Activated T-helper 1 cell treated with anti-CD3 and anti-CD28 coated beads, Interleukin-12 subunit alpha, Interleukin-12 subunit beta, Interleukin-2, Interleukin-4 antibody, amounts not matched to agents 30 ng/mL and 10 ng/mL and 1 ng/mL, durations not matched to agents 14 hours and 24 hours and 36 hours (primary cell): ENCODE measurements at regions of chr7 and their contacts with region 1.

Region 1: DNA sequence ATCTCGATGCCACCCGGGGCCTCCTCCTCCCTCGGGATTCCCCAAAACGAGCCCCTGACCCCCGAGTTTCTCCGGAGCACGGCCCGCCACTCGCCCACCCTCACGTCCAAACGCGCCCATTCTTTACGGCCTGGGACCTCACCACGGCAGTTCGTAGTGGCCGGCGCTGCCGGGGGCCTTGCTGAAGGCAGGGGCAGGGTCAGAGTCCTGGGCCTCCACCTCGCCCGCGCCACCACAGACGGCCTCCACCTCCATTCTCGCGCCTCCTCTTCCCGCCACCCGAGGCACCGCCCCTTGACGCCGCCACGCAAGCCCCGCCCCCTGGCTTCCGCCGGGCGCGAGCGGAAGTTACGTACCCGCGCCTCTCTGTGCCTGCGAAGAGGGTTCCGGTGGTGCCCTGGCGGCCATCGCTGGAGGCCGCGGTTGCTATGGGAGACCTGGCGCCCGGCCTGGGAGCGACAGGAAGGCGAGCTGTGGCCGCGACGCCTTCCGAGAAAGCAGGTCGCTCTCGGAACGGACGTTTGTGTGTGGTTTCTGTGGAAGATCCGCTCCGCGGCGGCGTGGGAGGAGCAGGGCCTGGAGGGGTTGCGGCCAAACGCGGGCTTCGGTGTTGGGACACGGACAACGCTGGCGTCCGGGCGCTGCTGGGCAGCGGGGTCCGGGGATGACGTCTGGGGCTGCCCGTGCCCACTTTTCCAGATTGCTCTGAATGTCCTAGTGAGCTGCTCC is at the start of gene RFC2:
- DNase-seq: peak; percentile 98
- H3K4me3 Mint-ChIP-seq: peak within 1 kb of the TSS; percentile 95
- H3K27ac Mint-ChIP-seq: peak within 1 kb of the TSS; percentile 95
- H3K4me1 Mint-ChIP-seq: peaks cover 21% of the 10 kb centered on the region
- H3K27me3 Mint-ChIP-seq: no peaks in the 10 kb centered on the region
- total RNA-seq, gene RFC2: 87.3 and 89.1 TPM in 2 replicates

Region 2: GRCh38 chr7:74094224-74095101 is 159.8 kb before region 1 on chr7:
- intact Hi-C with region 1: loop called (anchors 2 kb)
- DNase-seq: peak; percentile 64
- H3K4me3 Mint-ChIP-seq: peak overlapping the region; percentile 82
- H3K27ac Mint-ChIP-seq: peak overlapping the region; percentile 95
- H3K4me1 Mint-ChIP-seq: peaks cover 18% of the 10 kb centered on the region
- H3K27me3 Mint-ChIP-seq: no peaks in the 10 kb centered on the region

Region 3: GRCh38 chr7:74173866-74174605 is 80.3 kb before region 1 on chr7 and contains the start of gene EIF4H:
- intact Hi-C with region 1: loop called (anchors 1 kb)
- DNase-seq: peak; percentile 93
- H3K4me3 Mint-ChIP-seq: peak within 1 kb of the TSS; percentile 94
- H3K27ac Mint-ChIP-seq: peak within 1 kb of the TSS; percentile 90
- H3K4me1 Mint-ChIP-seq: peaks cover 45% of the 10 kb centered on the region
- H3K27me3 Mint-ChIP-seq: peaks cover 3% of the 10 kb centered on the region
- total RNA-seq, gene EIF4H: 343 and 355 TPM in 2 replicates

Region 4: GRCh38 chr7:74206589-74207120 is 47.6 kb before region 1 on chr7:
- intact Hi-C with region 1: loop called (anchors 1 kb)
- DNase-seq: peak; percentile 72
- H3K4me3 Mint-ChIP-seq: peak overlapping the region; percentile 49
- H3K27ac Mint-ChIP-seq: no peak overlapping the region
- H3K4me1 Mint-ChIP-seq: peaks cover 23% of the 10 kb centered on the region
- H3K27me3 Mint-ChIP-seq: no peaks in the 10 kb centered on the region

Region 5: GRCh38 chr7:74269757-74270277 is 15.5 kb after region 1 on chr7:
- intact Hi-C with region 1: loop called (anchors 1 kb)
- DNase-seq: peak; percentile 42
- H3K4me3 Mint-ChIP-seq: peak overlapping the region; percentile 79
- H3K27ac Mint-ChIP-seq: no peak overlapping the region
- H3K4me1 Mint-ChIP-seq: peaks cover 12% of the 10 kb centered on the region
- H3K27me3 Mint-ChIP-seq: peaks cover 19% of the 10 kb centered on the region

Region 6: DNA sequence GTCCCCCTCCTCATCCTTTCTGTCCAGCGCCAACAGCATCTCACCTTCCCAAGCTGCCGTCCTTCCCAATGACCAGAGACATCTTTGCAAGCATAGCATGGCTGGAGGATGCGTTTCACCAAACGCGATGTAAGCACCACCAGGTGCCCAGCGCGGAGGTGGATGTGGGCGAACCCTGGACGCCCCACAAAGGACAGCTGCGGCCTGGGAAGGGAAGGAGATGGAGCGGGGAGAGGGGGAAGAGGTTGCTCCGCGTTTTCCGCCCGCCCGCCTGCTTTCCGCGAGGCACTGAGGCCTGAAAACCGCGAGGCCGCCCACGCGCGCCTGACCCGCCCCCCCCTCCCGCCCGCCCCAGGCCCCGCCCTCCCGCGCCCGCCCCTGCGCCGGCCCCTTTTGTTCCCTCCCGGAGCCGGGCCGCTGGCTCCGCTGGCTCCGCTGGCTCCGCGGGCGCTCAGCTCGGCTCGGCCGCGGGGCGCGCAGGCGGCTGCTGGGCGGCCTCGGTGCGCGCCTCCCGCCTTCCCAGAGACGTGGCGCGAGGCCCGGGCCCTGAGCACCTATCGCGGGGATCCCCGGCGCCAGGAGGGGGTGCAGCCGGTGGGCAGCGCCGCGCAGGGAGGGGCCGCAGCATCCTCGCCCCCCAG is 34.8 kb after region 1 on chr7 and contains the start of gene CLIP2:
- intact Hi-C with region 1: loop called (anchors 1 kb)
- DNase-seq: peak; percentile 56
- H3K4me3 Mint-ChIP-seq: peak within 1 kb of the TSS; percentile 83
- H3K27ac Mint-ChIP-seq: peak within 1 kb of the TSS; percentile 82
- H3K4me1 Mint-ChIP-seq: peaks cover 25% of the 10 kb centered on the region
- H3K27me3 Mint-ChIP-seq: peaks cover 33% of the 10 kb centered on the region
- total RNA-seq, gene CLIP2: 1.5 and 1.7 TPM in 2 replicates

Region 7: DNA sequence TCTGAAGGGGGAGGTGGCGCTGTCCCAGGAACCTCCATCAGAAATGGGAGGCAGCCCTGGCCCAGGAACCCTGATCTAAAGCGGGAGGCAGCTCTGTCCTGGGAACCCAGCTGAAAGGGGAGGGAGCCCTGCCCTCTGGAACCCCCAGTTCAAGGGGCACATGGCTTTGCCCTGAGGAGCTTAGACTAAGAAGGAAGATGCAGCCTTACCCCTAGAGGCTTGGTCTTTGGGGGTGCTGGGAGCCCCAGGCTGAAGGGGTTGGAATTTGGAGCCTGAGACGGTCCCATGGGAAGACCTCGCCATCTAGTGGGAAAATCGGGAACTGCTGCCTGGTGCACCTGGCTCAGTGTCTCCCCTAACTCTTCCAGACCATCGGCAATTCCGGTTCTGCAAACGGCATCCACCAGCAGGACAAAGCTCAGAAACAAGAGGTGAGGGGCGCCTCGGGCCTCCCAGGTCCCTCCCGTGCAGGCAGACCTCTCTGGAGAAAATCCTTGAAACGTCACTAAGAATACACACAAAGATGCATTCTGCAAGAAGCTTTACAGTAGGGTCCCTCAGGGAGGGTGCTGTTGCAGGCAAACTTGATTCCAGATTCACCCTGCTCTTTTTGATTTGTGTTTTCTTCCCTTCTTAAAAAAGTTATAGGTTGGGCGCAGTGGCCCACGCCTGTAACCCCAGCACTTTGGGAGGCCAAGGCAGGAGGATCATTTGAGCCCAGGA is 147.0 kb after region 1 on chr7:
- intact Hi-C with region 1: loop called (anchors 5 kb)
- DNase-seq: peak; percentile 47
- H3K4me3 Mint-ChIP-seq: no peak overlapping the region
- H3K27ac Mint-ChIP-seq: no peak overlapping the region
- H3K4me1 Mint-ChIP-seq: no peaks in the 10 kb centered on the region
- H3K27me3 Mint-ChIP-seq: no peaks in the 10 kb centered on the region

Region 8: DNA sequence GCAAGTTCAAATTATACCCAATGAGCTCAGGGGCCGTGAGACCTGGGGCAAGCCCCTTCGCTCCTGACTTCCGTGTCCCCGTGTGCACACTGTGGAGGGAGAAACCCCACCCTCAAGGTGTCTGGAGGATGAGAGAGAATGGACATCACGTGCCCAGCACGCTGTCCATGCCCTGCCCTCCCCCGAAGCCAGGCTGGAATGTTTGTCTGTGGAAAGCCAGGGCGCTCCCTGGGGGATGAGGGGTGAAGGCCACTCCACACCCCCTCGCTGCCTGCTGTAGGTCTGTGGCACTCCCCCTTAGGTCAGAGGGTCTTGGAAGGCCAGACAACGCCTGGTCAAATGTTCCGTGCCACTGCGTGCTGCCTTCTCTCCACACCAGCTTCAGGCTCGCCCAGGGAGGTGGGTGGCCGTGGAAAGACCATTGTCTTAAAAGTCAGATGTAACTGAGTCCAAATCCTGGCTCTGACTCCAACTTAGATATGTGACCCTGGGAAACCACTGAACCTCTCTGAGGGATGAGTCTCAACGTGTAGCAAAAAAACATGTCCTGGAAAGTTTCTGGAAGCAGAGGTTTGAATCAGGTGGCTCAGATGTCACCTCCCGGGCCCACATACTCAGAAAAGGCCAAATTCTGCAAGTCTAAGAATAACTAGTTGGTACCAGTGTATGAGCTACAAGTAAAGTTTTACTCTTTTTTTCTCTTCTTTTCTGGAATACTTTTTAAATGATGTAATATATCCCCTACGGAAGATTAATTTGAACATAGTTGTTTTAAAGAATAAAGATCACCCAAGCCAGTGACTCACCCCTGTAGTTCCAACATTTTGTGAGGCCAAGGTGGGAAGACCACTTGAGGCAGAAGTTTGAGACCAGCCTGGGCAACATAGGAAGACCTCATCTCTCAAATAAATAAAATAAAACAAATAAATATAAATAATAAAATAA is 794.4 kb after region 1 on chr7:
- intact Hi-C with region 1: no loop called
- DNase-seq: no peak
- H3K4me3 Mint-ChIP-seq: no peak overlapping the region
- H3K27ac Mint-ChIP-seq: no peak overlapping the region
- H3K4me1 Mint-ChIP-seq: no peaks in the 10 kb centered on the region
- H3K27me3 Mint-ChIP-seq: no peaks in the 10 kb centered on the region